ENCODE measurements at regions of chr12 and their contacts with region 1.

Region 1: GRCh38 chr12:120234643-120235368 is 30.7 kb downstream of the PXN start:
- DNase-seq: peak; percentile 90
- ATAC-seq: peak; percentile 40
- H3K4me3 ChIP-seq: no peak overlapping the region
- H3K27ac ChIP-seq: peak overlapping the region; percentile 100
- H3K4me1 ChIP-seq: peaks cover 95% of the 10 kb centered on the region
- H3K27me3 ChIP-seq: no peaks in the 10 kb centered on the region
- CTCF ChIP-seq: peak; percentile 25

Region 2: DNA sequence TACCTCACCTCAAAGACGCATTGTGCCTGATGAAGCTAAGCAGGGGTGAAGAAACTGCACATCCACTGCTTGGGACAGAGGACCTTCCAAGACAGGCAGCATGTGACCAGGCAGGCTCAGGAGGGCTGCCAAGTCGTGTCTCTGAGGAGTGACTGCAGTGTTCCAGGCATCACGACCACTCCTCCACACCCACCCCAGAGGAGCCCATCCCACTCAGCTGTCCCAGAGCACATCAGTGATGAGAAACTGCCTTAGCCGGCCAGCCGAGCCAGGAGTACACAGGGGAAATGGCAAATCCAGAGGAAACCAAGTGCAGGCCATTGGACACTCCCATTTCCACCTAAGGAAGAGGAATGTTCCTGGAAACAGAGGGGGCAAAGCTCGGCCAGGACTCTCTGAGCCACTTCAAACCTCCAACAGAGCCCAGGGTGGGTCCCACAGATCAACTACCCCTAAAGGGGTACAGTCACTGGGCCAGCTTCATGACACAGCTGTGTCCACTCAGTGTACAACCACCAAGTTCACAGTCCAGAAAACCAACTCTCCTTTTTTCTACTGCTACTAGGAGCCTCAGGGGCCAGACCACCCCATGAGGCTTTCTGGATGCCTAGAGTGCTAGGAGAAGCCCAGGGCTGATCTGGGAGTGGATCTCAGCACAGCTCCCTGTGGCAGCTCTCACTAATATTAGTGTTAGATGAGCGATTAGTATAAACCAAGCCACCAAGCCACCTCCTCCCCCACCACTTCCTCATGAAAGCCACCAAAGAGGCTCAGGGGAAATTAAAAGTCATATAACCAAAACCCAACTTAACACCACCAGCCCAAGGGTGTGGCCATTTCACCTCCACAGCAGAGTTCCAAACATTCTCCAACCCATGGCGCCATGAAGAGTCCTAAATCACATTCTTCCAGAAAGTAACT is 15.3 kb after region 1 on chr12:
- CTCF ChIA-PET with region 1: interaction called, 12 read pairs
- POLR2A ChIA-PET with region 1: interaction called, 11 read pairs
- in situ Hi-C with region 1: no loop called
- intact Hi-C with region 1: no loop called
- DNase-seq: no peak
- ATAC-seq: 0 out of 2 replicates have a peak, but pooled peaks have one; percentile 1
- H3K4me3 ChIP-seq: peak overlapping the region in 1 of 2 experiments; percentile 8; a peak in 1 of 4 replicates
- H3K27ac ChIP-seq: peak overlapping the region; percentile 100
- H3K4me1 ChIP-seq: peaks cover 97% of the 10 kb centered on the region
- H3K27me3 ChIP-seq: no peaks in the 10 kb centered on the region
- CTCF ChIP-seq: no peak